Naive thymus-derived CD4-positive, alpha-beta T cell (primary cell): ENCODE measurements at regions of chr7 and their contacts with region 1.

Region 1: DNA sequence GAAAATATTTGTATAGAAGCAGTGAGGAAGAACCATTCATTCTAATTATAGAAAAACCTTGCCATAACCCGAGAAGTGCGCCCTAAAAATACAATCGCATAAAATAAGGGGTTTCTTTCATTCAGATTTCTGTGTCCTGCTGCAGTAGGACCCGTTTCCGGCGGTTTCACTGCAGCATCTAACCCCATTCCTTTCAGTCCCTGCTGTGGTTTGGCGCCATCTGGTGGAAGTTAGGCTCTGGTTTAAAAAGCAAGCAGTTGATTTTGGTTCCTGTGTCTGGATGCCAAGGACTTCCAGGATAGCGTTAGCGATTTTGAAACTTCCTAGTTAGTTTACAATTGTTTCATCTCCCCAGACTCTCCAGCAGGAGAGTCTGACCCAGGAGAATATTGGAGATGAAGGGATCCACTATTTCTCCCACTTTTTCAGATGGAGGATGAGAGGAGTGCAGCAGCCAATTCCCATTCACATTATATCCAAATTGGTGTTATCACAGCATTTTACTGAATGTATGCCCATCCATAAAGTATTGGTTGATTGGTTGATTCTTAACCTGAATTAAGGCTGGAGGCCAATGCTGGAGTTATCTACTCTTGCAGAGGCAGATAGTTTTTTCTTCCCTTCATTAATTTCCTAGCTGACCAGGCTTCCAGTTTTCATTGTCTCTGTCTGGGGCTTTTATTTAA is 128.8 kb upstream of the CACNA2D1 start:
- DNase-seq: peak; percentile 17 to 64 (median 30)
- ATAC-seq: peak; percentile 68
- H3K4me3 ChIP-seq: no peak overlapping the region
- H3K4me3 Mint-ChIP-seq: no peak overlapping the region
- H3K27ac ChIP-seq: no peak overlapping the region
- H3K27ac Mint-ChIP-seq: no peak overlapping the region
- H3K4me1 ChIP-seq: no peaks in the 10 kb centered on the region
- H3K4me1 Mint-ChIP-seq: peaks cover 0 to 2% (median 0%) of the 10 kb centered on the region in 7 donors
- H3K27me3 ChIP-seq: no peaks in the 10 kb centered on the region
- H3K27me3 Mint-ChIP-seq: peaks cover 0 to 9% (median 0%) of the 10 kb centered on the region in 5 donors

Region 2: GRCh38 chr7:81482600-81483186 is 1089.6 kb before region 1 on chr7:
- CTCF ChIA-PET with region 1: no interaction called
- POLR2A ChIA-PET with region 1: no interaction called
- intact Hi-C with region 1: loop called in 1 of 2 experiments (anchors 1 kb)
- DNase-seq: peak in 1 of 9 donors; percentile 1
- ATAC-seq: no peak
- H3K4me3 ChIP-seq: no peak overlapping the region
- H3K4me3 Mint-ChIP-seq: no peak overlapping the region
- H3K27ac ChIP-seq: no peak overlapping the region
- H3K27ac Mint-ChIP-seq: no peak overlapping the region
- H3K4me1 ChIP-seq: no peaks in the 10 kb centered on the region
- H3K4me1 Mint-ChIP-seq: peaks cover 0 to 1% (median 0%) of the 10 kb centered on the region in 7 donors
- H3K27me3 ChIP-seq: no peaks in the 10 kb centered on the region
- H3K27me3 Mint-ChIP-seq: no peaks in the 10 kb centered on the region

Region 3: DNA sequence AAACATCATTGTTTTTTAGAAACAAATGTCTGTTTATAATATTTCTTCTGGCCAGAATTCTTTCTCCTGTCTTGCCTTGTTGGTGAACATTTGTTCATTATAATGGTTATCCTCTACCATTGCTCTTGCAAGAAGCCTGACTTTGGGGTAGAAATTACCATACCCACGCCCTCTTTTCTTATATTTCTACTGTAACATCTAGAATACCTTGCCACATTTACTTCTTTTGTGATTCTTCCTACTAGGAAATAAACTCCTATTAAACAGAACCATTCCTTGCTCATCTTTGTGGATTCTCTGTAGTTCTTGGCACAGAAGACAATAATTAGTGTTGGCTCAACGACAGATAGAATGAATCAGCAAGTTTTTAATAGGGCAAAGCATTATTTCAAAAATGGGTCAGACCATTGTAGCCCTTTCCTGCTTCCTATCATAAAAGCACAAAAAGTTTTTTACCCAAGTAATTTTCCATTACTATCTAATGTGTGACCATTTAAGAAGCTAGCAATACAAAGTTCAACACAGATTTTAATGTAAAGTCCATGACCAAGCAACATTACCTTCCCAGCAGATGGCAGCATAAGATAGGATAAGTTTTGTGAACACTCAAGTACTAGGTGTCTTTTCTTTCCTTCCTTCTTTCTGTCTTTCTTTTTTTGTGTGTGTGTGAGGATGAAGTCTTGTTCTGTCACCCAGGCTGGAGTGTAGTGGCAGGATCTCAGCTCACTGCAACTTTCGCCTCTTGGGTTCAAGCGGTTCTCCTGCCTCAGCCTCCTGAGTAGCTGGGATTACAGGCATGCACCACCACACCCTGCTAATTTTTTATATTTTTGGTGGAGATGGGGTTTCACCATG is 1072.8 kb before region 1 on chr7:
- CTCF ChIA-PET with region 1: no interaction called
- POLR2A ChIA-PET with region 1: no interaction called
- intact Hi-C with region 1: loop called (anchors 5 kb)
- DNase-seq: no peak
- ATAC-seq: no peak
- H3K4me3 ChIP-seq: no peak overlapping the region
- H3K4me3 Mint-ChIP-seq: no peak overlapping the region
- H3K27ac ChIP-seq: no peak overlapping the region
- H3K27ac Mint-ChIP-seq: no peak overlapping the region
- H3K4me1 ChIP-seq: no peaks in the 10 kb centered on the region
- H3K4me1 Mint-ChIP-seq: no peaks in the 10 kb centered on the region
- H3K27me3 ChIP-seq: no peaks in the 10 kb centered on the region
- H3K27me3 Mint-ChIP-seq: no peaks in the 10 kb centered on the region

Region 4: DNA sequence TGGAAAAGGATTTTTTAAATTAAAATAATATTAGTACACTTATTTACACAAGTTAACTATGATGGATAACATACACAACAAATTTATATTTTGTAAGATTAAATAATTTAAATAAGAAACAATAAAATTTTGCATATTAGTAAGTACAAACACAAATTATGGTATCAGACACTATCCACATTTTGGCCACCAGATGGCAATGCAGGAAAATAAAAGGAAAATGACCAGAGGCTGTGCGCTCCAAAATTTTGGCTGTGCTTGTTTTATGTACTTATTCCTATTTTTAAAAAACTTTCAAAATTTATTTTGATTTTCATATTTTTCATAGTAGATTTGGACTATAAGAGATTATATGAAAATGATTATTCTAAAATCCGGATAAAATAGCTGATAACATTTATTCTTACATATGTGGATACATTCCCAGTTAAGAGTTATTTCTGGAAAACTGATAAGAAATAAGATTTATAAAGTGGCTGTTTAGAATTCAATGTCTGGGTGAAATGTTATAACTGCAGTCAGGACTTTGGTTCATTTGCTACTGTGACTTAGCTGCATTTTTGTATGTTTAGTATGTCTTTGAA is 527.7 kb before region 1 on chr7:
- CTCF ChIA-PET with region 1: no interaction called
- POLR2A ChIA-PET with region 1: no interaction called
- intact Hi-C with region 1: loop called in 1 of 2 experiments (anchors 1 kb)
- DNase-seq: peak in 1 of 9 donors; percentile 7
- ATAC-seq: no peak
- H3K4me3 ChIP-seq: no peak overlapping the region
- H3K4me3 Mint-ChIP-seq: no peak overlapping the region
- H3K27ac ChIP-seq: no peak overlapping the region
- H3K27ac Mint-ChIP-seq: no peak overlapping the region
- H3K4me1 ChIP-seq: no peaks in the 10 kb centered on the region
- H3K4me1 Mint-ChIP-seq: no peaks in the 10 kb centered on the region
- H3K27me3 ChIP-seq: no peaks in the 10 kb centered on the region
- H3K27me3 Mint-ChIP-seq: no peaks in the 10 kb centered on the region

Region 5: GRCh38 chr7:82234457-82235049 is 337.8 kb before region 1 on chr7:
- CTCF ChIA-PET with region 1: no interaction called
- POLR2A ChIA-PET with region 1: no interaction called
- intact Hi-C with region 1: loop called in 1 of 2 experiments (anchors 10 kb)
- DNase-seq: no peak
- ATAC-seq: no peak
- H3K4me3 ChIP-seq: no peak overlapping the region
- H3K4me3 Mint-ChIP-seq: no peak overlapping the region
- H3K27ac ChIP-seq: no peak overlapping the region
- H3K27ac Mint-ChIP-seq: no peak overlapping the region
- H3K4me1 ChIP-seq: no peaks in the 10 kb centered on the region
- H3K4me1 Mint-ChIP-seq: no peaks in the 10 kb centered on the region
- H3K27me3 ChIP-seq: no peaks in the 10 kb centered on the region
- H3K27me3 Mint-ChIP-seq: no peaks in the 10 kb centered on the region

Region 6: DNA sequence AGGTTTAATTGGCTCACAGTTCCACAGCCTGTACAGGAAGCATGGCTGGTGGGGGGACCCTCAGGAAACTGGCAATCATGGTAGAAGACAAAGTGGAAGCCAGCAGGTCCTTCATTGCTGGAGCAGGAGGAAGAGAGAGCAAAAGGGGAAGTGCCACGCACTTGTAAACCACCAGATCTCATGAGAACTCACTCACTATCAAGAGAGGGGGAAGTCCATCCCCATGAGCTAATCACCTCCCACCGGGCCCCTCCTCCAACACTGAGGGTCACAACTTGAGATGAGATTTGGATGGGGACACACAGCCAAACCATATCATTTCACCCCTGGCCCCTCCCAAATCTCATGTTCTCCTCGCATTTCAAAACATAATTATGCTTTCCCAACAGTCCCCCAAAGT is 43.2 kb after region 1 on chr7:
- CTCF ChIA-PET with region 1: no interaction called
- POLR2A ChIA-PET with region 1: no interaction called
- intact Hi-C with region 1: no loop called
- DNase-seq: no peak
- ATAC-seq: peak; percentile 71
- H3K4me3 ChIP-seq: no peak overlapping the region
- H3K4me3 Mint-ChIP-seq: no peak overlapping the region
- H3K27ac ChIP-seq: no peak overlapping the region
- H3K27ac Mint-ChIP-seq: no peak overlapping the region
- H3K4me1 ChIP-seq: no peaks in the 10 kb centered on the region
- H3K4me1 Mint-ChIP-seq: peaks cover 0 to 4% (median 0%) of the 10 kb centered on the region in 7 donors
- H3K27me3 ChIP-seq: no peaks in the 10 kb centered on the region
- H3K27me3 Mint-ChIP-seq: no peaks in the 10 kb centered on the region